Mammary epithelial cell (primary cell): ENCODE measurements at regions of chr18 and their contacts with region 1.

Region 1: GRCh38 chr18:31162419-31162793 is 250 bp downstream of the DSC1 start:
- DNase-seq: peak; percentile 79
- H3K4me3 ChIP-seq: peak overlapping the region in 1 of 3 experiments; percentile 5
- H3K27ac ChIP-seq: peak overlapping the region; percentile 46
- H3K4me1 ChIP-seq: peaks cover 20% of the 10 kb centered on the region
- H3K27me3 ChIP-seq: no peaks in the 10 kb centered on the region
- CTCF ChIP-seq: no peak

Region 2: GRCh38 chr18:31197676-31198075 is 35.3 kb after region 1 on chr18:
- CTCF ChIA-PET with region 1: no interaction called
- dilution Hi-C with region 1: no loop called
- in situ Hi-C with region 1: no loop called
- intact Hi-C with region 1: loop called (anchors 5 kb)
- DNase-seq: peak; percentile 92
- H3K4me3 ChIP-seq: no peak overlapping the region
- H3K27ac ChIP-seq: peak overlapping the region; percentile 36
- H3K4me1 ChIP-seq: peaks cover 21% of the 10 kb centered on the region
- H3K27me3 ChIP-seq: no peaks in the 10 kb centered on the region
- CTCF ChIP-seq: no peak

Region 3: GRCh38 chr18:31469629-31470028 is 307.2 kb after region 1 on chr18:
- CTCF ChIA-PET with region 1: no interaction called
- dilution Hi-C with region 1: no loop called
- in situ Hi-C with region 1: no loop called
- intact Hi-C with region 1: no loop called
- DNase-seq: no peak
- H3K4me3 ChIP-seq: no peak overlapping the region
- H3K27ac ChIP-seq: no peak overlapping the region
- H3K4me1 ChIP-seq: no peaks in the 10 kb centered on the region
- H3K27me3 ChIP-seq: no peaks in the 10 kb centered on the region
- CTCF ChIP-seq: no peak